Panc1 (cell line): ENCODE measurements at regions of chr17 and their contacts with region 1.

Region 1: GRCh38 chr17:28982131-28982951 is 23.5 kb downstream of the SEZ6 start:
- DNase-seq: no peak
- ATAC-seq: no peak
- H3K4me3 ChIP-seq: no peak overlapping the region
- H3K27ac ChIP-seq: no peak overlapping the region
- H3K4me1 ChIP-seq: no peaks in the 10 kb centered on the region
- H3K27me3 ChIP-seq: no peaks in the 10 kb centered on the region
- CTCF ChIP-seq: no peak

Region 2: GRCh38 chr17:28258347-28259206 is 723.8 kb before region 1 on chr17:
- CTCF ChIA-PET with region 1: no interaction called
- POLR2A ChIA-PET with region 1: no interaction called
- in situ Hi-C with region 1: no loop called
- intact Hi-C with region 1: no loop called
- DNase-seq: no peak
- ATAC-seq: no peak
- H3K4me3 ChIP-seq: no peak overlapping the region
- H3K27ac ChIP-seq: no peak overlapping the region
- H3K4me1 ChIP-seq: no peaks in the 10 kb centered on the region
- H3K27me3 ChIP-seq: no peaks in the 10 kb centered on the region
- CTCF ChIP-seq: no peak

Region 3: DNA sequence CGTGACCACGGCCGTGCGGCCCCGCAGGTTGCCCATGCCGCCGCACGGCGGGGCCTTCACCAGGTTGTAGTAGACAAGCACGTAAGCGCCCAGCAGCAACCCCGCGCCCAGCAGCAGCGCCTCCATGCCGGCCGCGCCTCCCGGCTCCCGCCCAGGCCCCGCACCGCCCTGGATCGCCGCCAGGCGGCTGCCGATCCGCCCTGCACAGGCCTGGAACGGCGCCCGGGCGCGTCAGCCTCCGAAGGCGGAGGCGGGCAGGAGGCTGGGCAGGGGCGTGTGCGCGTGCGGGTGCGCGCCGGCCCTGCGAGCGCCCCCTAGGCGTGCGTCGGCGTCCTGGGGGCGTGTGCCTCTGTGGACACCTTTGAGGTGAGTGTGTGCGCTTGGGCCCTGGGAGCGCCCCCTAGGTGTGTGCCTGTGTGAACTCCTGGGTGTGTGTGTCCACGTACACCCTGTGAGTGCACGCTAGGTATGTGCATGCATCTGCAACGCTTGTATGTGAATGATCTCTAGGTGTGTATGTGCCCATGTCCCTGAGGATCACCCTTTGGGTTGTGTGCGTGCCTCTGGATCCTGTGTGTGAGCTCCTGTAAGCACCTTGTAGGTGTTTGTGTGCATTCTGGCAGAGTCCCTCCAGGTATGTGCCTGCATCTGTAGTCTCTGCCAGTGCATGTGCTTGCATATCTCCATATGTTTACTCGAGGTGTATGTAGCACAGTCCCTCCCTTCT is 79.4 kb before region 1 on chr17 and contains the start of gene DHRS13:
- CTCF ChIA-PET with region 1: no interaction called
- POLR2A ChIA-PET with region 1: no interaction called
- in situ Hi-C with region 1: no loop called
- intact Hi-C with region 1: no loop called
- DNase-seq: peak; percentile 57
- ATAC-seq: peak; percentile 97
- H3K4me3 ChIP-seq: peak within 1 kb of the TSS; percentile 62 to 63
- H3K27ac ChIP-seq: peak within 1 kb of the TSS; percentile 48
- H3K4me1 ChIP-seq: peaks cover 7% of the 10 kb centered on the region
- H3K27me3 ChIP-seq: no peaks in the 10 kb centered on the region
- CTCF ChIP-seq: peak; percentile 100
- total RNA-seq, gene DHRS13: 5.2 TPM

Region 4: GRCh38 chr17:28935744-28936460 is 46.4 kb before region 1 on chr17:
- CTCF ChIA-PET with region 1: no interaction called
- POLR2A ChIA-PET with region 1: interaction called, 26 read pairs
- in situ Hi-C with region 1: no loop called
- intact Hi-C with region 1: no loop called
- DNase-seq: no peak
- ATAC-seq: no peak
- H3K4me3 ChIP-seq: no peak overlapping the region
- H3K27ac ChIP-seq: no peak overlapping the region
- H3K4me1 ChIP-seq: peaks cover 36% of the 10 kb centered on the region
- H3K27me3 ChIP-seq: no peaks in the 10 kb centered on the region
- CTCF ChIP-seq: no peak

Region 5: GRCh38 chr17:29347831-29348629 is 365.7 kb after region 1 on chr17:
- CTCF ChIA-PET with region 1: no interaction called
- POLR2A ChIA-PET with region 1: no interaction called
- in situ Hi-C with region 1: no loop called
- intact Hi-C with region 1: no loop called
- DNase-seq: no peak
- ATAC-seq: no peak
- H3K4me3 ChIP-seq: no peak overlapping the region
- H3K27ac ChIP-seq: no peak overlapping the region
- H3K4me1 ChIP-seq: peaks cover 3% of the 10 kb centered on the region; the same call in 1 of the 2 replicates
- H3K27me3 ChIP-seq: peaks cover 5% of the 10 kb centered on the region; the same call in 1 of the 2 replicates
- CTCF ChIP-seq: no peak